PC-9 (cell line): ENCODE measurements at regions of chr18 and their contacts with region 1.

Region 1: DNA sequence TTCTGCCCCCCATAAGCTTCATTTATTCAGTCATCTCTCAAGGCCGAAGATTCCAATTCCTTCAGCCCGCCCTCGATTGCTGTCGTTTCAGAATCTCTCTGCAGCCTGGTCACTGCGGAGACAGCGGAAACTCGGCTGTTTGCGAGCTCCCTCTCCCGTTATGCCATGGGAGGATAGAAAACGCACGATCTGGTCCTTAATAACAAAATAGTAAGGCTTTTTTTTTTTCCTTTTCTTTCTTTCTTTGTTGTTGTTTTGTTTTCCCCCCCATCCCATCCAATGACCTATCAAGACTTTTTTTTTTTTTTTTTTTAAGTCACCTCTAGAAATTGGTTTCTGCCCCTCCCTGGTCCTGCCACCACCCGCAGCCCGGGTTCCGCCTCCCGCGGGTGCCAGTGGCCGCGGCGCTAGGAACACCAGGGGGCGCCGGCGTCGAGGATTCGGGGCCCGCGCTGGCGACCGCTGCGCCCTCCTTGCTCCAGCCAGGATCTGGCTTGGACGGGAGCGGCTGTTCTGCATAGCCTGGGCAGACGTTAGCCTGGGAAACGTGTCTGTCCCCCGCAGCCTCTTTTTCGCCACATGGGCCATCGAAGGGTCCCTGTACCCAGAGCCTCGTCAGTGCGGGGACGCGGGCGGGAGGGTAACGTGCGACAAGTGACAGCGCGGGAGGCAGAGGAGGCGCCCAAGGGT is 10.1 kb downstream of the CPLX4 start:
- DNase-seq: peak in 1 of 2 experiments; percentile 73
- H3K4me3 ChIP-seq: peak overlapping the region; percentile 44; the same call in 1 of the 2 replicates
- H3K27ac ChIP-seq: no peak overlapping the region
- H3K4me1 ChIP-seq: no peaks in the 10 kb centered on the region
- H3K27me3 ChIP-seq: no peaks in the 10 kb centered on the region
- CTCF ChIP-seq: peak; percentile 78

Region 2: DNA sequence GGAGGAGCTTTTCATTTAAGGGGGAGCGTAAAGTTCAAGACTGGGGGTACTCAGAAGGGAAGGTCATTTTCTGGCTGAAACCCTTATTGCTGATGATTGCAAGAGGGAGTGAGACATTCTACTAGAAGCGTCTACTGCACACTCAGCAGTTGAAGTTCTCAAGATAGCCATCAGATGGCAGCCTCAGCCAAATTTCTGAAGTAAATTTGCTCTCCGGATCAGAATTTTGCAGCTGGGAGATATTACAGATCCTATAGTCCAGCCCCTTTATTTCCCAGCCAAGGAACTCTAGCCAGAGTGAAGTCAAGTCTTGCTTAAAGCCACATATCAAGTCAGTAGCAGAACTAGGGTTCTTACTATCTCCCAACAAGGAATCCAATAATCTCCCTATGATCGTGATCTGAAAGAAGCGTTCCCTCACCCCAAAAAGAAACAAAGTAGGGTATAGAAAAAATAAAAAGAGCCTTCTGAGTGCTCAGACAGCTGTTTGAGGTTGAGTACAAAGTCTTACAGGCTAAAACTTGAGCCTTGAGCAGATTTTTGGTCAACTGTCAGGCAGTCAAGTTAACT is 59.1 kb before region 1 on chr18:
- CTCF ChIA-PET with region 1: no interaction called
- POLR2A ChIA-PET with region 1: no interaction called
- intact Hi-C with region 1: loop called (anchors 2 kb)
- DNase-seq: peak; percentile 31 to 60
- H3K4me3 ChIP-seq: no peak overlapping the region
- H3K27ac ChIP-seq: no peak overlapping the region
- H3K4me1 ChIP-seq: no peaks in the 10 kb centered on the region
- H3K27me3 ChIP-seq: peaks cover 34% of the 10 kb centered on the region
- CTCF ChIP-seq: peak; percentile 86

Region 3: GRCh38 chr18:59432803-59433597 is 124.6 kb after region 1 on chr18:
- CTCF ChIA-PET with region 1: no interaction called
- POLR2A ChIA-PET with region 1: interaction called, 20 read pairs
- intact Hi-C with region 1: no loop called
- DNase-seq: no peak
- H3K4me3 ChIP-seq: no peak overlapping the region
- H3K27ac ChIP-seq: no peak overlapping the region
- H3K4me1 ChIP-seq: no peaks in the 10 kb centered on the region
- H3K27me3 ChIP-seq: peaks cover 7% of the 10 kb centered on the region
- CTCF ChIP-seq: no peak